ENCODE measurements at regions of chr2 and their contacts with region 1.

Region 1: DNA sequence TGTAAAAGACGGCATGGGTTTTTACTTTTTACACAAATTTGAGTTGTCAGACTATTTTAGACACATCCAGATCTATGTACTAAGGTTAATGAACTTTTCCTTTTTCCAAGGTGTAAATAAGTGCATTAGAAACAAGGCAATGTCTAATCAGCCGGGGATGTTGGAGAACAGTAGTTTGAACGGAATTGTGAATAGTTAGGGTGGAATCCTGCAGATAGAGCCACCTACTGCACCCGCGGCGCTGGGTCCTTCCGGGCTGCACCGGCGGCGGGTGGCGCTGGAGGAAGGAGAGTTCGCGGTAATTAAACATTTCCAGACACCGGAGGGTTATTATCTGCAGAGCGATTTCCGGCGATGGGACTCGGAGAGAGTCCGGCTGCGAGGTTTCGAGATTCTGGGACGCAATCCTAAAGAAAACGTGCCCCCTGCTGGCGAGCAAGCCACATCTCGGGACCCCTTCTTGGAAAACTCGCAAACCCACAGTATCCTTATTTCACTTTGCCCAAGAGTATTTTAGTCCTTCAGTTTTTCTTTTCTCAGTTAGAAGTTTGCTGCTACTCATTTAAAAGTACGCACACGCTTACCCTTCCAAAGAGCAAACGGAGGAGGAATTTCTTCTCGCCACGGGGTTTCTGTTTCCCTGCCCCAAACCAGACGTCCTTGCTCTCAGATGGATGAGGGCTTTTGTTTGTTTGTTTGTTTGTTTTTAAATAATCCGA is 4.5 kb upstream of the OSR1 start:
- DNase-seq: peak; percentile 67
- H3K4me3 ChIP-seq: peak overlapping the region; percentile 22 to 88 (median 48)
- H3K27ac ChIP-seq: no peak overlapping the region
- H3K4me1 ChIP-seq: peaks cover 18% of the 10 kb centered on the region
- H3K27me3 ChIP-seq: peaks cover 72 to 75% of the 10 kb centered on the region in 2 experiments
- CTCF ChIP-seq: peak; percentile 84 to 88
- POLR2A ChIP-seq: no peak

Region 2: GRCh38 chr2:18387441-18388206 is 975.3 kb before region 1 on chr2:
- CTCF ChIA-PET with region 1: no interaction called
- POLR2A ChIA-PET with region 1: no interaction called
- dilution Hi-C with region 1: no loop called
- intact Hi-C with region 1: loop called (anchors 1 kb)
- DNase-seq: peak; percentile 74
- H3K4me3 ChIP-seq: no peak overlapping the region
- H3K27ac ChIP-seq: no peak overlapping the region
- H3K4me1 ChIP-seq: peaks cover 12% of the 10 kb centered on the region
- H3K27me3 ChIP-seq: no peaks in the 10 kb centered on the region
- CTCF ChIP-seq: peak; percentile 85 to 92
- POLR2A ChIP-seq: no peak

Region 3: DNA sequence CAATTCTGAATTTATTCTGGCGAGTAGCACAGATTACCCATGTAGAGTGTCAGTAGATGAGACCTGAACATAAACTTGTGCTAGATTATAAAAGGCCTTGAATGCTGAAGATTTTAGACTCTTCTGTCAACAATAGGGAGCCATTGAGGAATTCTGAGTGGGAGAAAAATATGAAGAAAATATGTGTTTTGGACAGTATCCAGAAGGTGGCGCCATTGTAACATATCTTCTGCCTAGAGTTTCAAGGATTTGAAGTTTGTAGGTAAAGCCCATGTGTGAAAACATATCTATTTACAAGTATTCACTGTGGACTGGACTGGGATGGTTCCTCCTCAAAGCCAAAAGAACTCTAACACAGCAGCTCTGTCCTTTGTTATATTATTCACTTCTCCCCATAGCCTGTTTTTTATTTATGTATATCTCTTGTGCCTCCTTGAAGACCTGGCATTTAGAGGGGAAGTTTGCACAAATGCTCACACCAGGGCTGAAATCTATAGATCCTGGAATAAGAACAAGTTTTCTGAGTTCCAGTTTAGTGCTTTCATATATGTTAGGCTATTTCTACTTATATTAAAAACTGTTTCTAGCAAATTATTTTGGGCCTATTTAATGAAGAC is 927.4 kb before region 1 on chr2:
- CTCF ChIA-PET with region 1: interaction called, 4 read pairs
- POLR2A ChIA-PET with region 1: no interaction called
- dilution Hi-C with region 1: no loop called
- intact Hi-C with region 1: loop called (anchors 1 kb)
- DNase-seq: peak; percentile 75
- H3K4me3 ChIP-seq: no peak overlapping the region
- H3K27ac ChIP-seq: no peak overlapping the region
- H3K4me1 ChIP-seq: peaks cover 5% of the 10 kb centered on the region
- H3K27me3 ChIP-seq: no peaks in the 10 kb centered on the region
- CTCF ChIP-seq: peak; percentile 39 to 51
- POLR2A ChIP-seq: no peak

Region 4: GRCh38 chr2:18749912-18750526 is 612.9 kb before region 1 on chr2:
- CTCF ChIA-PET with region 1: interaction called, 6 read pairs
- POLR2A ChIA-PET with region 1: no interaction called
- dilution Hi-C with region 1: no loop called
- intact Hi-C with region 1: loop called (anchors 1 kb)
- DNase-seq: peak; percentile 42
- H3K4me3 ChIP-seq: no peak overlapping the region
- H3K27ac ChIP-seq: no peak overlapping the region
- H3K4me1 ChIP-seq: no peaks in the 10 kb centered on the region
- H3K27me3 ChIP-seq: no peaks in the 10 kb centered on the region
- CTCF ChIP-seq: peak; percentile 44 to 52
- POLR2A ChIP-seq: no peak

Region 5: GRCh38 chr2:18788592-18788991 is 574.3 kb before region 1 on chr2:
- CTCF ChIA-PET with region 1: no interaction called
- POLR2A ChIA-PET with region 1: no interaction called
- dilution Hi-C with region 1: no loop called
- intact Hi-C with region 1: no loop called
- DNase-seq: peak; percentile 35
- H3K4me3 ChIP-seq: no peak overlapping the region
- H3K27ac ChIP-seq: no peak overlapping the region
- H3K4me1 ChIP-seq: no peaks in the 10 kb centered on the region
- H3K27me3 ChIP-seq: no peaks in the 10 kb centered on the region
- CTCF ChIP-seq: no peak
- POLR2A ChIP-seq: no peak

Region 6: DNA sequence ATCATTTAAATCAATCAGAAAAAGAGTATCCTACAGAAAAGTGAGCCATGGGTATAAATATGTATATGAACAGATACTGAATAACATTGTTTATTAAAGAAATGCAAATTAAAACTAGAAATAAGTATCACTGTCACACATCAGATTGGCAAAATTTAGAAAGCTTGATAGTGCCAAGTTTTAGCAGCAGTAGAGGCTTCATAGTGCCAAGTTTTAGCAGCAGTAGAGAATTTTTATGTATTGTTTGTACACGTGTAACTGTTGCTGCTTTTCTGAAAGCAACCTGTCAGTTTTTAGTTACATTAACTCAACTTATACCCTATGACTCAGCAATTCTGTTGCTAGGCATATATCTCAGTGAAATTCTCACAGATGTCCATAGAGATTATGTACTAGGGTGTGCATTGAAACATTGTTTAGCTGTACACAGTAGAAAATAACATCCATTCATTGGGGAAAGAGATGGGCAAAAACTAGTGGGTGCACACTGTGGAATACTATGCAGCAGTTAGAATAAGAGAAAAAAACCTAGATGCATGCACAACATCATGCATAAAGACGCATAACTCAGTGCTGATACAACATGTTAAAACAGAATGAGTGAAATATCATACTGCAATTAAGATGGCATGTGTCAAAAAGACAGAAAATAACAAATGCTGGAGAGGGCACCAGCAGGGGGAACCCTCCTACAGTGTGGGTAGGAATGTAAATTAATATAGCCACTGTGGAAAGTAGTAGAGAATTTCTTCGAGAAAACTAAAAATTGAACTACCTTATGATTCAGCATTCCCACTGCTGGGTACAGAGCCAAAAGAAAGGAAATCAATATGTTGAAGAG is 479.1 kb before region 1 on chr2:
- CTCF ChIA-PET with region 1: no interaction called
- POLR2A ChIA-PET with region 1: no interaction called
- dilution Hi-C with region 1: no loop called
- intact Hi-C with region 1: loop called (anchors 1 kb)
- DNase-seq: no peak
- H3K4me3 ChIP-seq: no peak overlapping the region
- H3K27ac ChIP-seq: no peak overlapping the region
- H3K4me1 ChIP-seq: no peaks in the 10 kb centered on the region
- H3K27me3 ChIP-seq: no peaks in the 10 kb centered on the region
- CTCF ChIP-seq: peak in 1 of 2 donors; percentile 11
- POLR2A ChIP-seq: no peak

Region 7: GRCh38 chr2:19746611-19747309 is 383.8 kb after region 1 on chr2:
- CTCF ChIA-PET with region 1: interaction called, 3 read pairs
- POLR2A ChIA-PET with region 1: no interaction called
- dilution Hi-C with region 1: no loop called
- intact Hi-C with region 1: loop called (anchors 1 kb)
- DNase-seq: peak; percentile 29
- H3K4me3 ChIP-seq: no peak overlapping the region
- H3K27ac ChIP-seq: no peak overlapping the region
- H3K4me1 ChIP-seq: no peaks in the 10 kb centered on the region
- H3K27me3 ChIP-seq: no peaks in the 10 kb centered on the region
- CTCF ChIP-seq: peak; percentile 15 to 54
- POLR2A ChIP-seq: no peak